Sigmoid colon (tissue), 7 donors: ENCODE measurements at regions of chr1 and their contacts with region 1.

Region 1: GRCh38 chr1:107572653-107573211 is 392.2 kb downstream of the VAV3 start:
- DNase-seq: peak; percentile 72
- H3K4me3 ChIP-seq: no peak overlapping the region
- H3K27ac ChIP-seq: peak overlapping the region; percentile 15 to 67 (median 63)
- H3K4me1 ChIP-seq: peaks cover 0 to 35% (median 23%) of the 10 kb centered on the region in 4 donors
- H3K27me3 ChIP-seq: no peaks in the 10 kb centered on the region
- CTCF ChIP-seq: no peak
- EP300 ChIP-seq: peak in 3 of 4 donors; percentile 19 to 45 (median 26)
- POLR2A ChIP-seq: no peak

Region 2: DNA sequence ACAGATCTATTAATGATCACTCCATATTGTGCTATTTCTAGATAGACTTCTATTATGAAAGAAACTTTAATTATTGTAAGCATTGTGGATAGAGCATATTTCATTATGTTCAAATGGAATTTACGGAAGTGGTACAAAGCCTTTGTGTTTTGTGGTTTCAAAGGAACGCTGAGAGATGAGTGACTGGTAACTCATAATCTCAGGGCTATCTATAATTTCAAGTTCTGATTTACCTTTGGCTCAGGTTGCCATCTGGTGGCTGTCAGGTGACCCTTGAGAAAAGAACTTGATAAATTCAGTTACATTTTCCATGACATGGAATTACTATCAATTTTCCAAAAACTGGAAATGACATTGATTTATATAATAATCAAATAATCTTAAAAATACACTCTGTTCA is 419.7 kb before region 1 on chr1:
- intact Hi-C with region 1: no loop called
- DNase-seq: no peak
- H3K4me3 ChIP-seq: no peak overlapping the region
- H3K27ac ChIP-seq: no peak overlapping the region
- H3K4me1 ChIP-seq: peaks cover 0 to 9% (median 4%) of the 10 kb centered on the region in 4 donors
- H3K27me3 ChIP-seq: no peaks in the 10 kb centered on the region
- CTCF ChIP-seq: no peak
- EP300 ChIP-seq: no peak
- POLR2A ChIP-seq: no peak

Region 3: GRCh38 chr1:107529502-107530149 is 43.1 kb before region 1 on chr1:
- intact Hi-C with region 1: no loop called
- DNase-seq: no peak
- H3K4me3 ChIP-seq: no peak overlapping the region
- H3K27ac ChIP-seq: peak overlapping the region in 3 of 4 donors; percentile 53 to 61 (median 59)
- H3K4me1 ChIP-seq: peaks cover 0 to 31% (median 13%) of the 10 kb centered on the region in 4 donors
- H3K27me3 ChIP-seq: no peaks in the 10 kb centered on the region
- CTCF ChIP-seq: peak in 3 of 4 experiments; percentile 67 to 84 (median 70)
- EP300 ChIP-seq: no peak
- POLR2A ChIP-seq: no peak

Region 4: GRCh38 chr1:107622966-107623365 is 50.2 kb after region 1 on chr1:
- intact Hi-C with region 1: no loop called
- DNase-seq: no peak
- H3K4me3 ChIP-seq: no peak overlapping the region
- H3K27ac ChIP-seq: peak overlapping the region in 1 of 4 donors; percentile 15
- H3K4me1 ChIP-seq: peaks cover 0 to 21% (median 12%) of the 10 kb centered on the region in 4 donors
- H3K27me3 ChIP-seq: no peaks in the 10 kb centered on the region
- CTCF ChIP-seq: no peak
- EP300 ChIP-seq: no peak
- POLR2A ChIP-seq: no peak

Region 5: GRCh38 chr1:107669996-107670395 is 97.3 kb after region 1 on chr1:
- intact Hi-C with region 1: loop called (anchors 5 kb)
- DNase-seq: peak; percentile 95
- H3K4me3 ChIP-seq: no peak overlapping the region
- H3K27ac ChIP-seq: peak overlapping the region; percentile 56 to 70 (median 66)
- H3K4me1 ChIP-seq: peaks cover 0 to 41% (median 22%) of the 10 kb centered on the region in 4 donors
- H3K27me3 ChIP-seq: no peaks in the 10 kb centered on the region
- CTCF ChIP-seq: no peak
- EP300 ChIP-seq: no peak
- POLR2A ChIP-seq: no peak

Region 6: GRCh38 chr1:107688354-107688753 is 115.6 kb after region 1 on chr1:
- intact Hi-C with region 1: loop called (anchors 5 kb)
- DNase-seq: no peak
- H3K4me3 ChIP-seq: no peak overlapping the region
- H3K27ac ChIP-seq: peak overlapping the region; percentile 52 to 66 (median 58)
- H3K4me1 ChIP-seq: peaks cover 0 to 74% (median 42%) of the 10 kb centered on the region in 4 donors
- H3K27me3 ChIP-seq: no peaks in the 10 kb centered on the region
- CTCF ChIP-seq: no peak
- EP300 ChIP-seq: no peak
- POLR2A ChIP-seq: peak in 1 of 2 donors; percentile 39